Activated CD8-positive, alpha-beta T cell treated with anti-CD3 and anti-CD28 coated beads for 36 hours (primary cell): ENCODE measurements at regions of chr1 and their contacts with region 1.

Region 1: GRCh38 chr1:201895913-201896807 is 7.5 kb downstream of the SHISA4 start:
- DNase-seq: peak; percentile 94
- ATAC-seq: peak; percentile 96
- H3K4me3 Mint-ChIP-seq: peak overlapping the region; percentile 38
- H3K27ac Mint-ChIP-seq: peak overlapping the region; percentile 75
- H3K4me1 Mint-ChIP-seq: peaks cover 7% of the 10 kb centered on the region
- H3K27me3 Mint-ChIP-seq: peaks cover 18% of the 10 kb centered on the region
- CTCF ChIP-seq: peak; percentile 91

Region 2: DNA sequence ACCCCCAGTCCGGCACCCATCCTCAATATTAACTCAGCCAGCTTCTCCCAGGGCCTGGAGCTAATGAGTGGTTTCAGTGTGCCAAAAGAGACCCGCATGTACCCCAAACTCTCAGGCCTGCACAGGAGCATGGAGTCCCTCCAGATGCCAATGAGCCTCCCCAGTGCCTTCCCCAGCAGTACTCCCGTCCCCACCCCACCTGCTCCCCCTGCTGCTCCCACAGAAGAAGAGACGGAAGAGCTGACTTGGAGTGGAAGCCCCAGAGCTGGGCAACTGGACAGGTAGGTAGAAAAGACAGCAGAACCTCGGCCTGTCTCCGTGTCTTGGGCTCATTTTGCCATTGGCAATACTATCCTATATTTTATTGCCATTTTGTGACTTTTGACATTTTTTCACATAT is 112.6 kb before region 1 on chr1:
- CTCF ChIA-PET with region 1: no interaction called
- POLR2A ChIA-PET with region 1: no interaction called
- intact Hi-C with region 1: no loop called
- DNase-seq: no peak
- ATAC-seq: no peak
- H3K4me3 Mint-ChIP-seq: no peak overlapping the region
- H3K27ac Mint-ChIP-seq: no peak overlapping the region
- H3K4me1 Mint-ChIP-seq: no peaks in the 10 kb centered on the region
- H3K27me3 Mint-ChIP-seq: no peaks in the 10 kb centered on the region
- CTCF ChIP-seq: no peak

Region 3: GRCh38 chr1:201795066-201795465 is 101.1 kb before region 1 on chr1:
- CTCF ChIA-PET with region 1: no interaction called
- POLR2A ChIA-PET with region 1: no interaction called
- intact Hi-C with region 1: no loop called
- DNase-seq: no peak
- ATAC-seq: no peak
- H3K4me3 Mint-ChIP-seq: no peak overlapping the region
- H3K27ac Mint-ChIP-seq: no peak overlapping the region
- H3K4me1 Mint-ChIP-seq: peaks cover 9% of the 10 kb centered on the region
- H3K27me3 Mint-ChIP-seq: no peaks in the 10 kb centered on the region
- CTCF ChIP-seq: no peak

Region 4: DNA sequence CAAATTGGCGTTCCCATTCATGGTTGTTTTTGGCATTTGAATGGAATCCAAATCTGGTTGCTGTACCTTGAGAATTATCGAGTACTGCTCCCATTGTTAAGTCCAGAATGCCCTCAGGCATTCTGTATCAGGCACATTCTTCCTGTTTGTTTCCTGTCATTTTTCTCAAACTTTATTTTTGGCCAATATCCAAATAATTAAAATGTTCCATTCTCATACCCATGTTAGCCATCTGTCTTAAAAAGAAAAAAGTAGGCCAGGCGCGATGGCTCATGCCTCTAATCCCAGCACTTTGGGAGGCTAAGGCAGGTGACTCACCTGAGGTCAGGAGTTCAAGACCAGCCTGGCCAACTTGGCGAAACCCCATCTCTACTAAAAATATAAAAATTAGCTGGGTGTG is 36.7 kb before region 1 on chr1:
- CTCF ChIA-PET with region 1: interaction called, 10 read pairs
- POLR2A ChIA-PET with region 1: no interaction called
- intact Hi-C with region 1: no loop called
- DNase-seq: no peak
- ATAC-seq: no peak
- H3K4me3 Mint-ChIP-seq: no peak overlapping the region
- H3K27ac Mint-ChIP-seq: no peak overlapping the region
- H3K4me1 Mint-ChIP-seq: no peaks in the 10 kb centered on the region
- H3K27me3 Mint-ChIP-seq: no peaks in the 10 kb centered on the region
- CTCF ChIP-seq: no peak

Region 5: GRCh38 chr1:201877877-201878401 is 18.2 kb before region 1 on chr1:
- CTCF ChIA-PET with region 1: interaction called, 100 read pairs
- POLR2A ChIA-PET with region 1: interaction called, 8 read pairs
- intact Hi-C with region 1: no loop called
- DNase-seq: peak; percentile 44
- ATAC-seq: peak; percentile 73
- H3K4me3 Mint-ChIP-seq: no peak overlapping the region
- H3K27ac Mint-ChIP-seq: peak overlapping the region; percentile 35
- H3K4me1 Mint-ChIP-seq: no peaks in the 10 kb centered on the region
- H3K27me3 Mint-ChIP-seq: no peaks in the 10 kb centered on the region
- CTCF ChIP-seq: peak; percentile 72

Region 6: GRCh38 chr1:201955009-201955728 is 59.0 kb after region 1 on chr1 and contains the start of gene TIMM17A:
- CTCF ChIA-PET with region 1: interaction called, 16 read pairs
- POLR2A ChIA-PET with region 1: interaction called, 4 read pairs
- intact Hi-C with region 1: no loop called
- DNase-seq: peak; percentile 97
- ATAC-seq: peak; percentile 100
- H3K4me3 Mint-ChIP-seq: peak within 1 kb of the TSS; percentile 98
- H3K27ac Mint-ChIP-seq: peak within 1 kb of the TSS; percentile 95
- H3K4me1 Mint-ChIP-seq: peaks cover 17% of the 10 kb centered on the region
- H3K27me3 Mint-ChIP-seq: no peaks in the 10 kb centered on the region
- CTCF ChIP-seq: no peak
- total RNA-seq, gene TIMM17A: 75.8 to 76.8 TPM

Region 7: GRCh38 chr1:201970334-201971159 is 74.4 kb after region 1 on chr1:
- CTCF ChIA-PET with region 1: interaction called, 130 read pairs
- POLR2A ChIA-PET with region 1: interaction called, 6 read pairs
- intact Hi-C with region 1: loop called (anchors 1 kb)
- DNase-seq: no peak
- ATAC-seq: no peak
- H3K4me3 Mint-ChIP-seq: no peak overlapping the region
- H3K27ac Mint-ChIP-seq: no peak overlapping the region
- H3K4me1 Mint-ChIP-seq: no peaks in the 10 kb centered on the region
- H3K27me3 Mint-ChIP-seq: no peaks in the 10 kb centered on the region
- CTCF ChIP-seq: no peak

Region 8: GRCh38 chr1:201999625-202000238 is 103.6 kb after region 1 on chr1:
- CTCF ChIA-PET with region 1: interaction called, 36 read pairs
- POLR2A ChIA-PET with region 1: interaction called, 3 read pairs
- intact Hi-C with region 1: no loop called
- DNase-seq: peak; percentile 36
- ATAC-seq: peak; percentile 92
- H3K4me3 Mint-ChIP-seq: no peak overlapping the region
- H3K27ac Mint-ChIP-seq: no peak overlapping the region
- H3K4me1 Mint-ChIP-seq: no peaks in the 10 kb centered on the region
- H3K27me3 Mint-ChIP-seq: no peaks in the 10 kb centered on the region
- CTCF ChIP-seq: peak; percentile 75

Region 9: DNA sequence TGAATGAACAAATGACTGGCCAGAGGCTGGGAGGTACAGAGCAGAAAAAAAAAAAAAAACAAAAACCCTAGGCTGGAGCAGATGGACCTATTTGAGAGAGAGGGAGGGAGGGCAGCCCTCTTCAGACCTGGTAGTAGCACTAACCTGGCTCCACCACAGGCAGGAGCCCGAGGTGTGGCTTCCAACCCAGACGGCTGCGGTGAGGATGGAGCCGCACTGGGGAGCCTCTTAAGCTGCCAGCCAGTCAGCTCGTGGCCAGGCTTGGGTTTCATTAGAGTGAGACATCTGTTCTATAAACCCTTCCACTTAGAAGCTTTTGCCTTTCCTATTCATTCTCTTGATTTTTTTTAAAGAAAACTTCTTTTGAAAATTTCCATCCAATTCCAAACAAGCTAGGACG is 314.2 kb after region 1 on chr1:
- CTCF ChIA-PET with region 1: no interaction called
- POLR2A ChIA-PET with region 1: no interaction called
- intact Hi-C with region 1: no loop called
- DNase-seq: no peak
- ATAC-seq: peak; percentile 32
- H3K4me3 Mint-ChIP-seq: no peak overlapping the region
- H3K27ac Mint-ChIP-seq: no peak overlapping the region
- H3K4me1 Mint-ChIP-seq: peaks cover 5% of the 10 kb centered on the region
- H3K27me3 Mint-ChIP-seq: peaks cover 32% of the 10 kb centered on the region
- CTCF ChIP-seq: no peak